MCF 10A (cell line): ENCODE measurements at regions of chr2 and their contacts with region 1.

Region 1: DNA sequence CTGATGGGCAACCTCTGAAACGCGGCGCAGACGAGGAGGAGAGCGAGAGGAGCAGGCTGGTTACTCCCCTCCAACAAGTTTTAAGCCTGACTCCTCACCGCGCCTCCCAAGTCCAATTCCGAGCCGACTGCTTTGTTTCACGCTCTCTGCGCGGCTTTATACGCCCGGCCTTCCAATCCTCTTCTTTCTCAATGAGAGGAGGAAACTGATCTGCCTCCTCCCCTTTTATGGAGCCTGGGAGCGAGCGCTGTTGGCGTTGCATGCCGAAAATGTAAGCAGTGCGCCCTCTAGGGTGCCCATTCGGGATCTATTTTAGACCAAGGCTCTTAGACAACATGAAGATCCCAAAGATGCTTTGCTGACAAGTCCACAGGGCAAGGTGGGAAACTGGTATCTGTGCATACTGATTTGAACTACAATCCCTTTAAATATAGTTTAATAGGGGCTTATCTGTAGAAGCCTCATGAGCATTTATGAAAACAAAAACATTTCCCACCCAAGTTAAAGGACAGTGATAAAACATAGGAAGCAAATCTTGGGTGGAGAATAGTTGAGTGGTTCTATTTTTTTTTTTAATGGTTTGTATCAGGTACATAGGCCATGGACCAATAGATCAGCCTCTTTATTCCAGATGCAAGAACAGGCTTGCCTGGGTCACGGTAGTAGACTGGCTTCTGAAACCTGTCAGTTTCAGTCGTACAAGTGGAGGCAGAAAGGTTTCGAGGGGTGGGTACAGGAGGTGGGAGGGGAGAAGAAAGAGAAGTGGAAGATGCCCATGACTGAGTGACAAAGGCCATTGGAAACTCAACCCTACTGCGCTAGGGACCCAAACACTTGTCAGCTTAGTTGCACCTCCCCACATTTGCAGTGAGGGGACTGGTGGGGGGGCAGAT is at the start of gene RND3:
- DNase-seq: peak; percentile 99
- H3K4me3 Mint-ChIP-seq: peak within 1 kb of the TSS; percentile 98
- H3K27ac Mint-ChIP-seq: peak within 1 kb of the TSS; percentile 97
- H3K4me1 Mint-ChIP-seq: peaks cover 20% of the 10 kb centered on the region
- H3K27me3 Mint-ChIP-seq: no peaks in the 10 kb centered on the region
- CTCF ChIP-seq: peak; percentile 79
- total RNA-seq, gene RND3: 158 and 182 TPM in 2 replicates

Region 2: DNA sequence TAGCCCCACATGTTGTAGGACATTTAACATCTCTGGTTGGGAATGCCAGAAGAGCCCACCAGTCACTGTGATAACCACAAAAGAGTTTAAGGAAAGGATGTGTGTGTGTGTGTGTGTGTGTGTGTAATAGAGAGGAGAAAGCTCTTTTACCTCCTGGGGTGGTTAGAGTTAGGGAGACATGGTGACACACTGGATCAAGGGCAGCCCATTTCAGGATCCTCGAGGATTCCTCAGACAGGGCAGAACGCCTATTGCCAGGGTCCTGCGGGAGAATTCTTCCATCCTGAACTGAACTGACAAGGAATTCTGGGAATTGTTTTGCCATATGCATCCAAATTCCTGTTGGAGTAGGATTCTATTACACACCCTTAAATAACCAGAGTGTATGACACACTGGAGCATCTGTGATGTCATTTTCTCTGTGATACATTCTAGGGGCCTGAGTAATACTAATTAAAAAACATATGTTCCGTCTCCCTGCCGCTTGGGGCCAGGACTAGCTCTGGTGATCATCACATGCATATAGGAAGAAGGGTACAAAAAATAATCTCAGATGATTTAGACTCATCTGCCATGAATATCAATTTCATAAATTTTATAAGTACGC is 743.8 kb before region 1 on chr2:
- CTCF ChIA-PET with region 1: no interaction called
- POLR2A ChIA-PET with region 1: interaction called, 3 read pairs
- intact Hi-C with region 1: loop called (anchors 2 kb)
- DNase-seq: peak; percentile 75
- H3K4me3 Mint-ChIP-seq: no peak overlapping the region
- H3K27ac Mint-ChIP-seq: peak overlapping the region; percentile 17
- H3K4me1 Mint-ChIP-seq: peaks cover 51% of the 10 kb centered on the region
- H3K27me3 Mint-ChIP-seq: no peaks in the 10 kb centered on the region
- CTCF ChIP-seq: no peak

Region 3: GRCh38 chr2:150143087-150143536 is 344.7 kb before region 1 on chr2:
- CTCF ChIA-PET with region 1: no interaction called
- POLR2A ChIA-PET with region 1: interaction called, 5 read pairs
- intact Hi-C with region 1: loop called (anchors 1 kb)
- DNase-seq: peak; percentile 23
- H3K4me3 Mint-ChIP-seq: no peak overlapping the region
- H3K27ac Mint-ChIP-seq: peak overlapping the region; percentile 95
- H3K4me1 Mint-ChIP-seq: peaks cover 10% of the 10 kb centered on the region
- H3K27me3 Mint-ChIP-seq: no peaks in the 10 kb centered on the region
- CTCF ChIP-seq: no peak

Region 4: GRCh38 chr2:150357770-150358467 is 129.9 kb before region 1 on chr2:
- CTCF ChIA-PET with region 1: no interaction called
- POLR2A ChIA-PET with region 1: interaction called, 13 read pairs
- intact Hi-C with region 1: no loop called
- DNase-seq: peak; percentile 8
- H3K4me3 Mint-ChIP-seq: no peak overlapping the region
- H3K27ac Mint-ChIP-seq: no peak overlapping the region
- H3K4me1 Mint-ChIP-seq: peaks cover 9% of the 10 kb centered on the region
- H3K27me3 Mint-ChIP-seq: no peaks in the 10 kb centered on the region
- CTCF ChIP-seq: no peak

Region 5: GRCh38 chr2:150586858-150587257 is 99.1 kb after region 1 on chr2:
- CTCF ChIA-PET with region 1: no interaction called
- POLR2A ChIA-PET with region 1: interaction called, 6 read pairs
- intact Hi-C with region 1: loop called (anchors 5 kb)
- DNase-seq: peak; percentile 67
- H3K4me3 Mint-ChIP-seq: no peak overlapping the region
- H3K27ac Mint-ChIP-seq: peak overlapping the region; percentile 57
- H3K4me1 Mint-ChIP-seq: no peaks in the 10 kb centered on the region
- H3K27me3 Mint-ChIP-seq: no peaks in the 10 kb centered on the region
- CTCF ChIP-seq: no peak

Region 6: DNA sequence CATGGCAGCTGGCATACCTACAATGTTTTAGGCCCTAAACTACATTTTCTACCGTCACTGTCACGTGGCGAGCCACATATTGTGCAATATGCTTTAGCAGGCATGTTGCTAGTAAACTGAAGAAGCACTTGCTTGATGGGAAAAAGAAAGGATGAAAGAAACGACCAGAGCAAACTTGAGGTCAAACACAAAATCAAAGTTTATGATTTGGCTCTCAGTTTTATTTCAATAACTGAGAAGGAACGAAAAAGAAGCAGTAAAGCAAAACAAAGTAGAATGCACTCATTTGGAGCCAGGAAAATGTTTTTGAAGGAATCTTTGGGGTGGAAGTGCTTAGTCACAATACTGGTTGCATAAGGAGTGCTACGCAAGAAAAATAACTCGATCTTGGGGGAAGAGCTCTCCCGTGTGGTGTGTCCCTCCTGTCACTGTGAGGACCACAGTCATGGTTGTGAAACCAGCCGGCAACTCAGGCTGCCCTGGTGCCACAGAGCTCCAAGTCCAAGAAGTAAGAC is 424.0 kb after region 1 on chr2:
- CTCF ChIA-PET with region 1: interaction called, 6 read pairs
- POLR2A ChIA-PET with region 1: interaction called, 10 read pairs
- intact Hi-C with region 1: loop called (anchors 2 kb)
- DNase-seq: peak; percentile 90
- H3K4me3 Mint-ChIP-seq: peak overlapping the region; percentile 51
- H3K27ac Mint-ChIP-seq: peak overlapping the region; percentile 70
- H3K4me1 Mint-ChIP-seq: peaks cover 21% of the 10 kb centered on the region
- H3K27me3 Mint-ChIP-seq: no peaks in the 10 kb centered on the region
- CTCF ChIP-seq: peak; percentile 17